ENCODE measurements at regions of chr20 and their contacts with region 1.

Region 1: DNA sequence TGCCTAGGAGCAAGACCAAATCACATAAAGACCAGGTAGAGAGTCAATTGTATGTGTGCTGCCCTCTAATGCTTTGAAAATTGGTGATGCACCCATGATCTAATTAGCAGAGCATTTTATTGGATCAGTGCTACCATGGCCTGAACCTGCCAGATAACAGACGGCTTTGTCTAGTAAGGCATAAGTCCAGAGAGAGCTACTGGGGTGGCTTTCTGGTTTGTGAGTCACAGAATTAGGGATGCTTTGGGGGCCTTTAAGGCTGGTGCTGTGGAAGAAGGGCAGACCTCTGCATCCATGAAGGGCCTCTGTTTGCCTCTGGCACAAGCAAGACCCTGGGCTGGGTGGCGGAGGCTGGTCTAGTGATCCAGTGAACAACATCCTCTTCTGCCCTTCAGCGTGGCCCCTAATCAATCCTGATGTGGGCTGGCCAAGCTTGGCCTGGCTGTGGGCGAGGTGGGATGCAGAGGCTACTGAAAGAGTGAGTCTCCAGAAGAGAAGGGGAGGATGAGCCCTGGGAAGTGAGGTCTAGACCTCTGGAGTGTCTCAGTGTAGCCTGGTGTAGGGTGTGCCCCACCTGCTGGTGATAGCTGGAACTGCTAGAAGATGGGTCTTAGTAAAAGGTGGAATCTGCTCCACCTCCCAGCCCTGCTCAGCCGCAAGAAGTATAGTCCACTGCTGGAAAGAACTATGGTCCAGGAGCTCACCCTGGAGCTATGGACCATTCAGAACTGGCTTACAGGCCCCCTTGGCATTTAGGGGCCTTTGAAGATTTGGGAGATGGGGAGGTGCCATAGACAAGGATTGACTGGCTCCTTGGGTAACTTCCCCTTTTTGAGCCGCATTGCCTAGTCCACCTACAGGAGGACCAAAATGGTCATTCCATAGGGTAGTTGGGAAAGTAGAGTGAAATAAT is 36.7 kb upstream of the AAR2 start:
- H3K4me3 ChIP-seq: no peak overlapping the region
- H3K27ac ChIP-seq: no peak overlapping the region
- H3K4me1 ChIP-seq: no peaks in the 10 kb centered on the region
- CTCF ChIP-seq: peak; percentile 72

Region 2: DNA sequence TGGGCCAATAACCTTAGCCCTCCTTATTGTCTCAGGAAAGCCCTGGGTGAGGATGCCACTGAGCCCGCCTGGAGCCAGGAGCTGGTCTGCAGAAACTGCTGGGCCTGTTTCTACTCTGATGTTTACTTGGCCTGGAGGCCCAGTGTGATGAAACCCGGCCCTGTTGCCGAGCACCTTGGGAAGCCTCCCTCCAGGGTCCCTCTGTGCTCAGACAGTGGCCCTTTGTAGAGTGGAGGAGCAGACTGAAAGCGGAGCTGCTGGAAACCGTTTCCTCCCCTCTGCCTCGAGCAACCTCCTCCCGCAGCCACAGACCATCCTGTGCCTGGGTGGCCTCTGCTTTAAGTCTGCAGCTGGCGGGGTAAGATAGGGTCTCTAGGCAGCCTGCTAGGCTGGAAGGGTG is 129.2 kb before region 1 on chr20:
- CTCF ChIA-PET with region 1: no interaction called
- POLR2A ChIA-PET with region 1: no interaction called
- H3K4me3 ChIP-seq: no peak overlapping the region
- H3K27ac ChIP-seq: no peak overlapping the region
- H3K4me1 ChIP-seq: no peaks in the 10 kb centered on the region
- CTCF ChIP-seq: no peak

Region 3: DNA sequence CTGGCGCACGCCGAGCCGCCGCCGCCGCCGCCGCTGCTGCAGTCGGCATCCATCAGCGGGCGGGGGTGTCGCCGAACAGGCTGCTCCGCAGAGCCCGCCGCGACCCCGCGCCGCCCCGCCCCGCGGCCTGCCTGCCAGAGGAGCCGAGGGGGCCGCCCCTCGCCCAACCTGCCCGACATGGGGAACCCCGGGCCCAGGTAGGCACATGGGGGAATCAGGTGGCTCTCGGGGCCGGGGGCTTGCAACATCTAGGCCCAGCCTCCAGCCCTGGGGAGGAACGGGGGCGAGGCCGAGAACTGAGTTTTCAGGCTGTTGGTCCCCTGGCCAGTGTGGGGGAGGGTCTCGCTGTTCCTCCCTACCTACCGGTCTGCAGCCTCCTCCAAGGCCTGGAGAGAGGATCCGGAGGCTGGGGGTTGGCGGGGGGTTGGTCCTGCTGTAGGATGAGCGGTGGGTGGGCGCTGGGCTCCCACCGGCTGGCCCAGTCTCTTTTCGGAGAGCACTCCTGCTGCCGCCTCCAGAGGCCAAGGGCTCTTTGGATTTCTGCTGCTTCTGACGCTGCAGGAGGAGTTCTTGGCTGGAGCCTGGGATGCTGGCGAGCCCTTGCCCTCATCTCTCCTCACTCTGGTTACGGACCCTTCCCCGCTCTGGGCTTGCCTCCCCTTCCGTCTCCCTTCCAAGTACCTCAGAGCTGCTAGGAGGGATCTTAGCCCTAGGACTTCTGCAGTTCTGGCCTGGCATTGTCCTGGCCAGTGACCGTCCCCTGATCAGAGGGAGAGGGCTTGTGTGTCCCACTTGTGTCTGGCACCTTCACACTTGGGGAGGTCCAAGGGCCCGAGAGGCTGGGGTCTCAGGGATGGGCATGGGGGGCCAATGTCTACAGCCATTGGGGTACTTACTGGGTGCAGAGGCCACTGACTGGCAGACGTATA is 44.6 kb before region 1 on chr20 and contains the start of gene EPB41L1:
- CTCF ChIA-PET with region 1: interaction called, 101 read pairs
- POLR2A ChIA-PET with region 1: no interaction called
- H3K4me3 ChIP-seq: peak within 1 kb of the TSS; percentile 55
- H3K27ac ChIP-seq: peak within 1 kb of the TSS; percentile 46; the same call in 1 of the 2 replicates
- H3K4me1 ChIP-seq: peaks cover 8% of the 10 kb centered on the region
- CTCF ChIP-seq: no peak

Region 4: GRCh38 chr20:36183155-36183944 is 16.3 kb before region 1 on chr20:
- CTCF ChIA-PET with region 1: interaction called, 14 read pairs
- POLR2A ChIA-PET with region 1: no interaction called
- H3K4me3 ChIP-seq: no peak overlapping the region
- H3K27ac ChIP-seq: no peak overlapping the region
- H3K4me1 ChIP-seq: no peaks in the 10 kb centered on the region
- CTCF ChIP-seq: no peak

Region 5: GRCh38 chr20:36214684-36215256 is 15.2 kb after region 1 on chr20:
- CTCF ChIA-PET with region 1: interaction called, 36 read pairs
- POLR2A ChIA-PET with region 1: no interaction called
- H3K4me3 ChIP-seq: no peak overlapping the region
- H3K27ac ChIP-seq: no peak overlapping the region
- H3K4me1 ChIP-seq: no peaks in the 10 kb centered on the region
- CTCF ChIP-seq: peak; percentile 40

Region 6: GRCh38 chr20:36230019-36230418 is 30.4 kb after region 1 on chr20:
- CTCF ChIA-PET with region 1: interaction called, 10 read pairs
- POLR2A ChIA-PET with region 1: no interaction called
- H3K4me3 ChIP-seq: no peak overlapping the region
- H3K27ac ChIP-seq: no peak overlapping the region
- H3K4me1 ChIP-seq: no peaks in the 10 kb centered on the region
- CTCF ChIP-seq: no peak

Region 7: DNA sequence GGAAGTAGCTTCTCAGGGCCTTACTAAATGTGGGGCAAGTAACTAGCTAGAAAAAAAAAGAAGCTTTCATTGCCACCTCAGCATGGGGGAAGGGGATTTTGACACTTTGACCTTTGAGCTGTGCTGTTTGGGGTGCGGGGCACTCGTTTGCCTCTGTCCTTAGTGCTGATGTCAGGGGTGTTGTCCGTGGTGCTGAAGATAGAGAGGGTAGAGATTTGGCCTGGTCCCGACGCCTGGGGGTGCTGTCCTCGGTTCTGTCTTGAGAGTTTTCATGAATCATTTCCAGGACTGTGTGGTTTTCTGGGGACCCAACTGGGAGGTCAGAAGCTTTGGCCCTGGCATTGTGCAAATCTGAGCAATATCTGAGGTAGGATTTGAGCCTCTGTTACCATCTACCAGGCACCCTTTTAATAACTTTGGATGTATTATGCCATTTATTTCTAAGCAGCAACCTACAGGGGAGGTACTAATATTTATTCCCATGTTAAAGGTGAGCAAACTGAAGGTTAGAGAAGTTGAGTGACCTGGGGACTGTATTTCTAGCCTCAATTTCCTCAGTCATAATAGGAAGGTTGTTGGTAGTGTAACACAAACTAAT is 184.5 kb after region 1 on chr20:
- CTCF ChIA-PET with region 1: no interaction called
- POLR2A ChIA-PET with region 1: no interaction called
- H3K4me3 ChIP-seq: no peak overlapping the region
- H3K27ac ChIP-seq: no peak overlapping the region
- H3K4me1 ChIP-seq: no peaks in the 10 kb centered on the region
- CTCF ChIP-seq: 0 out of 2 replicates have a peak, but pooled peaks have one; percentile 38

Region 8: DNA sequence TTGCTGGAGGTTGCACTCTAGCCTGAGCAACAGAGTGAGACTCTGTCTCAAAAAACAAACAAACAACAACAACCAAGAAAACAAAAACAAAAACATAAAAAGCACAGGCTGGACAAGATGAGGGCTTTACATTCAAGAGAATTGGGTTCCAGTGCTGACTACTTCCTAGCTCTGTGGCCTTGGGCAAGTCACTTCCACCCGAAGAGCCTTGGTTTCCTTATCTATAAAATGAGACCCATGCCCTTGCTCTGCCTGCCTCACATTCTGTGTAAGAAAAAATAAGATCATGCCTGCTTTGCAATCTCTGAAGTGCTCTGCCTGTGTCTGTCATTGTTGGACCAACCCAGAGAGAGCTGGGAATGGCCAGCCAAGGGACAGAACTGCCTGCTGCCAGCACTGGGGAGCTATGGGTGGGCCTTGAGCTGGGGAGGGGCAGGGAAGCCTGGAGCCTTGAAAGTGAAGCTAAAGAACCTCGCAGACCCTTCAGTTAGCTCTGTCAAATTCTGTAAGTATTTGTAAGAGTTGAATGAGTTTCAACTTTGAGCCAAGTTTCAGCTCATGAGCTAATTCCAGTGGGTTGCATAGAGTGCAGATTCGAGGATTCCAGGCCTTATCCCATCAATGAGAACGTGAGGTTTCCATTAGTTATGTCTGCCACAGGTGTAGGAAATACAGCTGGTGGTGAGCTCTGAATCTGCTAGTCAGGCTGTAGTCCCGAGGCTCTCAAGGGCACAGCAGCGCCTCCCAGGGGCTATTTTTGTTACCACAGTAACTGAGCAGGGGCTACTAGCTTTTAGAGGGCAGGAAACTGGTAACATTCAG is 199.8 kb after region 1 on chr20:
- CTCF ChIA-PET with region 1: interaction called, 32 read pairs
- POLR2A ChIA-PET with region 1: no interaction called
- H3K4me3 ChIP-seq: no peak overlapping the region
- H3K27ac ChIP-seq: no peak overlapping the region
- H3K4me1 ChIP-seq: no peaks in the 10 kb centered on the region
- CTCF ChIP-seq: no peak

Region 9: GRCh38 chr20:36439040-36439730 is 239.6 kb after region 1 on chr20:
- CTCF ChIA-PET with region 1: interaction called, 44 read pairs
- POLR2A ChIA-PET with region 1: no interaction called
- H3K4me3 ChIP-seq: no peak overlapping the region
- H3K27ac ChIP-seq: no peak overlapping the region
- H3K4me1 ChIP-seq: no peaks in the 10 kb centered on the region
- CTCF ChIP-seq: peak; percentile 85